ENCODE measurements at regions of chr5 and their contacts with region 1.

Region 1: GRCh38 chr5:171207256-171207847 is 101.7 kb upstream of the TLX3 start:
- DNase-seq: peak; percentile 6
- H3K4me3 ChIP-seq: no peak overlapping the region
- H3K27ac ChIP-seq: no peak overlapping the region
- H3K27me3 ChIP-seq: no peaks in the 10 kb centered on the region
- CTCF ChIP-seq: peak; percentile 70

Region 2: DNA sequence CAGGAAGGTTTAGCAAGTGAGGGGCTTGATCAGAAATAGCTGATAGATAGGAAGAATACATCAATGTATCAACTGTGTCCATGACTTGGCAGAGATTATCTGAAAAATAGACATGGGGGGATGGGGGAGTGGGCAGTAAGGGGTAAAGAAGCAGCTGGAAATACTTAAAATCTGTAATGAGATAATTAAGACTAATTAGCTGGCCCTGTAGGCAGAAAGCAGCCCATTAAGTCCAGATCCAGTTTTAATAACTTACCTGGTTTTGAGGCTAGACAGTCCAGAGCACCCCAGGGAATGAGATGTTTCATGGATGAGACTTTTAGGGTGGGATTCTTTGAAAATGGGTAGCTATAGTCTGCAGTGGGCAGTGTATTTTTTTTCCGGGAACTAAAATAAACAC is 15.2 kb before region 1 on chr5:
- CTCF ChIA-PET with region 1: interaction called, 21 read pairs
- POLR2A ChIA-PET with region 1: no interaction called
- DNase-seq: no peak
- H3K4me3 ChIP-seq: no peak overlapping the region
- H3K27ac ChIP-seq: no peak overlapping the region
- H3K27me3 ChIP-seq: no peaks in the 10 kb centered on the region
- CTCF ChIP-seq: no peak

Region 3: DNA sequence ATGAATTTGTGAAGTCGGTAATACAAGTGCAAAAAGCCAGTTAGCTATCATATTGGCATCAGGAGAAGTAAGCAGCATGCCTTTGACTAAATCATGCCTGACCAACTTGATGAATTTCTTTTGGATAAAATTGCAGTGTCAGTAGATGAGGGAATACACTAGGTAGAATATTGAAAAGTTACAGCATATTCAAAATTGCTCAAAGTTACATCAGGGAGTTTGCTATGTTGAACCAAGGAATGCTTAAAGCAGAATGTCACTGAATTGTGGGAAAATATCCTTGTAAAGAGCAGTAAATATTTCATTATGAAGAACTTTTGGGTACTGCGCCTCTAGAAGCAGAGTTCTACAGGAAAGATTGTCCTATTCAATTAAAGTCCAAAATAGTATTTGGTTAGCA is 14.6 kb after region 1 on chr5:
- CTCF ChIA-PET with region 1: interaction called, 19 read pairs
- POLR2A ChIA-PET with region 1: no interaction called
- DNase-seq: no peak
- H3K4me3 ChIP-seq: no peak overlapping the region
- H3K27ac ChIP-seq: no peak overlapping the region
- H3K27me3 ChIP-seq: no peaks in the 10 kb centered on the region
- CTCF ChIP-seq: no peak

Region 4: DNA sequence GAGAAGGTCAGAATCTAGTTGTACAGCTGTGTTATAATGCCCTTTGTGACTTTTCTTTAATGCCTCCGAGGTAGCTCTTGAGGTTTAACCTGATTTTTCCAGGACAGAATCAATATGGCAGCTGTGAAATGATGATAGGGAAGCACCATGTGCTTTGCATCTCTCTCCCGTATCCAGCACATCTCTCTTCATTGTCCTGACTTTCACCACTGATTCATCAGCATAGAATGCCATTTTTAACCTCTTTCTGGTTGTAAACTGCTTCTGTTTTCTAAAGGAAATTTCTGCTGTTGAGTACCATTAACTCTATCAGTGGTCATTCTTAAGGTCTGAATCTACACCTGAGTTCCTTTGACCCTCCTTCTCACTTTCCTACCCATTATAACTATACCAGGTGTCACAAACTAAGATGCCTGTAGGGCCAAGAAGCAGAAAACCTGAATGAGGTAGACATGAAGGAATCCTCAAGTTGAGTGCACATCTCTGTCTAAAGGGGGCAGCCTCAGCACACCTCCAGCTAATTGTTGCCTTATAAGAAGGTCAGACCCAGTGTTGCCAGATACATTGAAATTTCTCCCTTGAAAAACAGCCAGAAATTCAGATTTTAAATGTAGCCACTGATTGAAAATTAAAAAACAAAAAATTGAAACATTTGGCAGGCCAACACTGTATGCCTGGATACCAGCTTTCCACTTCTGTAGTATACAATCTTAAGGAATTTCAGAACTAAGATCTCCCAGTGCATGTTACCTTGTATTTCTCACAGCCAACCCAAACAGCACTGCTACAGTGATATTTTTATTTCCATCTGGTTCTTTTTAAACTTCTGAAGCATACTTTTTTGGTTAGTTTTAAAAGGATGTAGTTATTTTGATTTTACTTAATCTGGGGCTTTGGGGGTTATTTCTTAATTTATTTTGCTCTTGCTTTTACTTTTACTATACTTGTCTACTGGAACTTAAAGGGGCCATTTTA is 65.9 kb after region 1 on chr5:
- CTCF ChIA-PET with region 1: interaction called, 13 read pairs
- POLR2A ChIA-PET with region 1: no interaction called
- DNase-seq: no peak
- H3K4me3 ChIP-seq: no peak overlapping the region
- H3K27ac ChIP-seq: no peak overlapping the region
- H3K27me3 ChIP-seq: no peaks in the 10 kb centered on the region
- CTCF ChIP-seq: peak; percentile 49